ENCODE measurements at regions of chr19 and their contacts with region 1.

Region 1: GRCh38 chr19:1168877-1169791 is 4.9 kb downstream of the SBNO2 start:
- DNase-seq: peak; percentile 97
- H3K4me3 Mint-ChIP-seq: peak overlapping the region; percentile 75
- H3K27ac Mint-ChIP-seq: peak overlapping the region; percentile 88
- H3K4me1 Mint-ChIP-seq: peaks cover 22% of the 10 kb centered on the region
- H3K27me3 Mint-ChIP-seq: no peaks in the 10 kb centered on the region
- CTCF ChIP-seq: no peak

Region 2: GRCh38 chr19:1026189-1027019 is 142.7 kb before region 1 on chr19 and contains the start of gene CNN2:
- CTCF ChIA-PET with region 1: no interaction called
- POLR2A ChIA-PET with region 1: interaction called, 11 read pairs
- intact Hi-C with region 1: no loop called
- DNase-seq: peak; percentile 80
- H3K4me3 Mint-ChIP-seq: peak within 1 kb of the TSS; percentile 86
- H3K27ac Mint-ChIP-seq: peak within 1 kb of the TSS; percentile 96
- H3K4me1 Mint-ChIP-seq: peaks cover 12% of the 10 kb centered on the region
- H3K27me3 Mint-ChIP-seq: no peaks in the 10 kb centered on the region
- CTCF ChIP-seq: no peak
- total RNA-seq, gene CNN2: 112 and 166 TPM in 2 replicates

Region 3: DNA sequence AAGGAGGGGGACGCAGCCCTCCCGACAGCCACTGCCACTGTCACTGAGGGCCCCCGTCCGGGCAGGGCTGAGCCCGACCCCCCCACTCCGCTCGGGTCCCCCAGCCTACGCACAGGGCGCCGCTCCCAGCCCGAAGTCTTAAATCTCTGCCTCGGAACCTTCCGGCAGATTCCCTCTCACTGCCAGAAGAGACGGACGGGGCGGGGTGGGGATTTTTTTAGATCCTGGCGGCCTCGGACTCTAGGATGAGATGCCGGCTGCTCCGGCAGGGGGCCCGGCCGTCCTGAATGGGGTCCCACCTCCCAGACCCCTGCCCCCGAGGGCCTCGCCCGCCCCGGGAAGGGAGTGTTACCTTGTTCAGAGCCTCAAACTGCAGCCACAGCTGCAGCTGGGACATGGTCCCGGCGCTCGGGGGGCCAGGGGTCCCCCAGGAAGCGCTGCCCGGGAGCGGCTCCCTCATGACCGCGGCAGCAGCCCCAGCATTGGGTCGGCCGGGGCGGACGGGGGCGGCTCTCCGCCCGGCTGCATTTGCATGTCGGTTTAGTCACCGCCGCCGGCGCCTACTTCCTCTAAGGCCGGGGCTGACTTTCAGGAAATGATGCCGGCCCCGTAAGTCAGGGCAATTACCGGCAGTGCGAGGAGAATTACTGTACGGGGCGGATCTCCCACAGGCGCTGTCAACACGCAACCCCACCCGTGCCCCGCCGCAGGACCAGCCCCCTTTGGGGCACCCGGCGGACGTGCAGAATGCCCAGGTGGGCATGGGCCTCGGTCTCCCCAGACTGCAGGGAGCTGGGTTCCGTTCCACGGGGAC is 37.2 kb before region 1 on chr19:
- CTCF ChIA-PET with region 1: interaction called, 3 read pairs
- POLR2A ChIA-PET with region 1: interaction called, 6 read pairs
- intact Hi-C with region 1: loop called (anchors 2 kb)
- DNase-seq: peak; percentile 90
- H3K4me3 Mint-ChIP-seq: peak overlapping the region; percentile 63
- H3K27ac Mint-ChIP-seq: peak overlapping the region; percentile 54
- H3K4me1 Mint-ChIP-seq: peaks cover 8% of the 10 kb centered on the region
- H3K27me3 Mint-ChIP-seq: no peaks in the 10 kb centered on the region
- CTCF ChIP-seq: no peak

Region 4: GRCh38 chr19:1183534-1184172 is 14.5 kb after region 1 on chr19:
- CTCF ChIA-PET with region 1: no interaction called
- POLR2A ChIA-PET with region 1: interaction called, 17 read pairs
- intact Hi-C with region 1: no loop called
- DNase-seq: peak; percentile 90
- H3K4me3 Mint-ChIP-seq: no peak overlapping the region
- H3K27ac Mint-ChIP-seq: peak overlapping the region; percentile 51
- H3K4me1 Mint-ChIP-seq: peaks cover 34% of the 10 kb centered on the region
- H3K27me3 Mint-ChIP-seq: no peaks in the 10 kb centered on the region
- CTCF ChIP-seq: no peak

Region 5: GRCh38 chr19:1241417-1242095 is 72.4 kb after region 1 on chr19 and contains the start of gene ATP5F1D:
- CTCF ChIA-PET with region 1: interaction called, 3 read pairs
- POLR2A ChIA-PET with region 1: interaction called, 15 read pairs
- intact Hi-C with region 1: no loop called
- DNase-seq: peak; percentile 93
- H3K4me3 Mint-ChIP-seq: peak within 1 kb of the TSS; percentile 71
- H3K27ac Mint-ChIP-seq: peak within 1 kb of the TSS; percentile 75
- H3K4me1 Mint-ChIP-seq: peaks cover 10% of the 10 kb centered on the region
- H3K27me3 Mint-ChIP-seq: no peaks in the 10 kb centered on the region
- CTCF ChIP-seq: no peak
- total RNA-seq, gene ATP5F1D: 256 and 258 TPM in 2 replicates

Region 6: GRCh38 chr19:1269065-1269477 is 99.9 kb after region 1 on chr19 and contains the start of gene CIRBP:
- CTCF ChIA-PET with region 1: no interaction called
- POLR2A ChIA-PET with region 1: interaction called, 11 read pairs
- intact Hi-C with region 1: no loop called
- DNase-seq: peak; percentile 99
- H3K4me3 Mint-ChIP-seq: peak within 1 kb of the TSS; percentile 84
- H3K27ac Mint-ChIP-seq: peak within 1 kb of the TSS; percentile 89
- H3K4me1 Mint-ChIP-seq: peaks cover 24% of the 10 kb centered on the region
- H3K27me3 Mint-ChIP-seq: no peaks in the 10 kb centered on the region
- CTCF ChIP-seq: no peak
- total RNA-seq, gene CIRBP: 316 and 362 TPM in 2 replicates